ENCODE measurements at regions of chr10 and their contacts with region 1.

Region 1: DNA sequence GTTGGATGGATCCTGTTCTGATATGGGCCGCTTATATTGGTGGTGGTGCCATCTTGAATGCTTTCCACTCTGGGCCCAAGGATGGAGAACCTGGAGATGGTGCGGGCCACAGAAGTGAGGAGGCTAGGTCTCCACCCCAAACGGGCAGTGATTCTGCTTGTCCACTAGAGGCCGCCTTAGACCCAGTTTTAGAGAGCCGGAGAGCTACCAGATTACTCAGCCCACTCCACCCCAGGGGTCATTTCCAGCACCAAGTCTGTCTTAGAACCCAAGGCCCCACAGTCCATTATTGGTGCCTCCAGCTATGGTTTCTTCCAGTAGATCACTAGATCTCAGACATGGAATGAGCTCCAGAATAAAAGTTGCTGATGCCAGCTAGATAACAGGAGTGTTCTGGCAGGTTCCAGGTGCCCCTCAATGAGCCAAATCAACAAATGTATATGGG is 11.8 kb upstream of the CAMK2G start:
- DNase-seq: no peak
- ATAC-seq: peak; percentile 67
- H3K4me3 ChIP-seq: no peak overlapping the region
- H3K27ac ChIP-seq: peak overlapping the region; percentile 95
- H3K4me1 ChIP-seq: peaks cover 44 to 68% of the 10 kb centered on the region in 2 experiments
- H3K27me3 ChIP-seq: no peaks in the 10 kb centered on the region
- CTCF ChIP-seq: peak in 2 of 3 experiments; percentile 83 to 94; a peak in 4 of 6 replicates
- POLR2A ChIP-seq: no peak
- RAD21 ChIP-seq: no peak

Region 2: GRCh38 chr10:73899423-73899822 is 13.3 kb after region 1 on chr10:
- CTCF ChIA-PET with region 1: interaction called, 10 read pairs
- POLR2A ChIA-PET with region 1: interaction called, 98 read pairs
- RAD21 ChIA-PET with region 1: interaction called, 3 to 4 read pairs
- intact Hi-C with region 1: no loop called
- DNase-seq: peak; percentile 75
- ATAC-seq: peak; percentile 79
- H3K4me3 ChIP-seq: no peak overlapping the region
- H3K27ac ChIP-seq: peak overlapping the region; percentile 61
- H3K4me1 ChIP-seq: peaks cover 34 to 55% of the 10 kb centered on the region in 2 experiments
- H3K27me3 ChIP-seq: no peaks in the 10 kb centered on the region
- CTCF ChIP-seq: no peak
- POLR2A ChIP-seq: no peak
- RAD21 ChIP-seq: peak; percentile 6; the same call in 1 of the 2 replicates

Region 3: GRCh38 chr10:73920089-73920488 is 34.0 kb after region 1 on chr10:
- CTCF ChIA-PET with region 1: interaction called, 3 read pairs
- POLR2A ChIA-PET with region 1: interaction called, 32 read pairs
- RAD21 ChIA-PET with region 1: no interaction called
- intact Hi-C with region 1: no loop called
- DNase-seq: no peak
- ATAC-seq: no peak
- H3K4me3 ChIP-seq: no peak overlapping the region
- H3K27ac ChIP-seq: 0 out of 2 replicates have a peak overlapping the region, but pooled peaks have one; percentile 4
- H3K4me1 ChIP-seq: peaks cover 3 to 42% of the 10 kb centered on the region in 2 experiments; a peak in 2 of 4 replicates
- H3K27me3 ChIP-seq: no peaks in the 10 kb centered on the region
- CTCF ChIP-seq: no peak
- POLR2A ChIP-seq: no peak
- RAD21 ChIP-seq: no peak

Region 4: GRCh38 chr10:73940634-73941221 is 54.6 kb after region 1 on chr10:
- CTCF ChIA-PET with region 1: interaction called, 142 read pairs
- POLR2A ChIA-PET with region 1: interaction called, 37 read pairs
- RAD21 ChIA-PET with region 1: interaction called, 41 to 47 read pairs
- intact Hi-C with region 1: loop called (anchors 1 kb)
- DNase-seq: peak; percentile 37
- ATAC-seq: peak; percentile 97
- H3K4me3 ChIP-seq: peak overlapping the region in 1 of 2 experiments; percentile 31; a peak in 2 of 4 replicates
- H3K27ac ChIP-seq: peak overlapping the region; percentile 7; the same call in 1 of the 2 replicates
- H3K4me1 ChIP-seq: peaks cover 11 to 43% of the 10 kb centered on the region in 2 experiments
- H3K27me3 ChIP-seq: no peaks in the 10 kb centered on the region
- CTCF ChIP-seq: peak; percentile 90 to 95 (median 93); a peak in 5 of 6 replicates
- POLR2A ChIP-seq: no peak
- RAD21 ChIP-seq: peak; percentile 100

Region 5: DNA sequence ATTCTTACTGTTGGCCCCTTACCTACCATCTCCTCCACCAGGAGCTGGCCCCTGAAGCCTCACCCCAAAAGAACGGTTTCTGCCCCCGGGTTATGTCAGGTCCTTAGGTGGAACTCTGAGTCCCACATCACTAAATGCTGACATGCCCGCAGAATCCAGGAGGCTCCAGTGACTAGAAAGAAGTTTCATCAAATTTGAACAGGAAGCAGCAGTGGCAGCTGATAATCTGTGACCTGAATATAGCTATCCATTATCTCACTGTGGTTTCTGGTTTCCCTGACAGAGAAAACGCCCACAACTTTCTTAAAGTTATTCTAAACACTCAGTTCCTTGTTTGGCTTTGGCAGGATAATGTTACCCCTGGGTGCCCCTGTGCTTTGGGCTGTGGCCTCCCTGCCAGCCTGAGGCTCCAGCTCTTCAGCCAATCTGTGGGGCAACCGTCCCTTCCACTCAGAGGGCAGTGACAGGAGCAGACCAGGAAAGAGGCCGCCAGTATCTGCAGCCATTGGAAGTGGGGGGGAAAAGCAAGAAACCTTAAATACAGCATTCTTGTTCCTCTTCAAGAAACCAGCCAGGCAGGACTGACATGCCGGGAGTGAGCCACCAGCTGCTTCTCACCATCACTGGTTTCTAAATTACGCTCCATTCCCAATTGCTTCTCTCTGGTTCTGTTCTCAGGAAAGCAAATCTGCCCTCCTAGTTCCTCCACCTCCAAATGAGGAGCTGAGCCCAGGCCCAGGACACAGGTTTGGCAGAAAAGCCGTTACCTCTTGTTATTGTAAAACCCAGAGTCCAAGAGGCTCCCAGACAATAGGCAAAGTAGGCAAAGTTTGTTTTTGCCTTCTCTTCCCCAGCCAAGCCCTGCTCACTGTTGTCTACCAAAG is 70.6 kb after region 1 on chr10:
- CTCF ChIA-PET with region 1: interaction called, 25 read pairs
- POLR2A ChIA-PET with region 1: interaction called, 14 read pairs
- RAD21 ChIA-PET with region 1: interaction called, 4 to 7 read pairs
- intact Hi-C with region 1: loop called (anchors 1 kb)
- DNase-seq: no peak
- ATAC-seq: peak; percentile 40
- H3K4me3 ChIP-seq: no peak overlapping the region
- H3K27ac ChIP-seq: peak overlapping the region; percentile 44
- H3K4me1 ChIP-seq: peaks cover 15 to 31% of the 10 kb centered on the region in 2 experiments
- H3K27me3 ChIP-seq: no peaks in the 10 kb centered on the region
- CTCF ChIP-seq: no peak
- POLR2A ChIP-seq: no peak
- RAD21 ChIP-seq: no peak

Region 6: DNA sequence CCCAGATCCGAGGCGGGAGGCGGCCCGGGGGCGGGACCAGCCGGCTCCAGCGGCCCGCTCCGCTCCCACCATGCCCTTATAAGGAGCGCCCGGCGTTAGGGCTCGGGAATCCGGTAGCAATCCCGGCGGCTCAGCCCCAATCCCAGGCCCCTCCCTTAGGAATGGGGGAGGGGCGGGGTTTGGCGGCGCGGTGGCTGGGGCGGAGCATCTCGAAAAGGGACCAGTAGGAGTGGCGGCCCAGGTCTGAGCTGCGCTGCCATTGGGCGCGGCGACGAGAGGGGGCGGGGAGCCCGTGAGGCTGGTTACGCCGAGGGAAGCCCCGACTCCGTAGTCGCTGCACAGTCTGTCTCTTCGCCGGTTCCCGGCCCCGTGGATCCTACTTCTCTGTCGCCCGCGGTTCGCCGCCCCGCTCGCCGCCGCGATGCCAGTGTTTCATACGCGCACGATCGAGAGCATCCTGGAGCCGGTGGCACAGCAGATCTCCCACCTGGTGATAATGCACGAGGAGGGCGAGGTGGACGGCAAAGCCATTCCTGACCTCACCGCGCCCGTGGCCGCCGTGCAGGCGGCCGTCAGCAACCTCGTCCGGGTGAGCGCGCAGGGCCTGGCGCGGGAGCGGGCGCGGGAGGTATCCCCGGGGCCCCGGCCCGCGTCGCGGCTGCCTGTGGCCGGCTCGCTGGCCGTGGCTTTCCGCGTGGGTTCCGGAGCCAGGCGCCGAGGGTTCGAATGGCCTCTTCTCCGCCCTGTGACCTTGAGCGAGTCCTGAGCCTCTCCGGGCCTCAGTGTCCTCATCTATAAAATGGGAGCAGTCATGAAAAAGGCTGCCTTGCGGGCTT is 111.9 kb after region 1 on chr10 and contains the start of gene VCL:
- CTCF ChIA-PET with region 1: interaction called, 4 read pairs
- POLR2A ChIA-PET with region 1: interaction called, 9 read pairs
- RAD21 ChIA-PET with region 1: interaction called in 1 of 2 experiments, 3 read pairs
- intact Hi-C with region 1: loop called (anchors 2 kb)
- DNase-seq: peak; percentile 95
- ATAC-seq: peak; percentile 89
- H3K4me3 ChIP-seq: peak within 1 kb of the TSS; percentile 95 to 98
- H3K27ac ChIP-seq: peak within 1 kb of the TSS; percentile 60
- H3K4me1 ChIP-seq: peaks cover 8 to 48% of the 10 kb centered on the region in 2 experiments
- H3K27me3 ChIP-seq: no peaks in the 10 kb centered on the region
- CTCF ChIP-seq: no peak
- POLR2A ChIP-seq: peak; percentile 90
- RAD21 ChIP-seq: no peak
- total RNA-seq, gene VCL: 106 TPM

Region 7: DNA sequence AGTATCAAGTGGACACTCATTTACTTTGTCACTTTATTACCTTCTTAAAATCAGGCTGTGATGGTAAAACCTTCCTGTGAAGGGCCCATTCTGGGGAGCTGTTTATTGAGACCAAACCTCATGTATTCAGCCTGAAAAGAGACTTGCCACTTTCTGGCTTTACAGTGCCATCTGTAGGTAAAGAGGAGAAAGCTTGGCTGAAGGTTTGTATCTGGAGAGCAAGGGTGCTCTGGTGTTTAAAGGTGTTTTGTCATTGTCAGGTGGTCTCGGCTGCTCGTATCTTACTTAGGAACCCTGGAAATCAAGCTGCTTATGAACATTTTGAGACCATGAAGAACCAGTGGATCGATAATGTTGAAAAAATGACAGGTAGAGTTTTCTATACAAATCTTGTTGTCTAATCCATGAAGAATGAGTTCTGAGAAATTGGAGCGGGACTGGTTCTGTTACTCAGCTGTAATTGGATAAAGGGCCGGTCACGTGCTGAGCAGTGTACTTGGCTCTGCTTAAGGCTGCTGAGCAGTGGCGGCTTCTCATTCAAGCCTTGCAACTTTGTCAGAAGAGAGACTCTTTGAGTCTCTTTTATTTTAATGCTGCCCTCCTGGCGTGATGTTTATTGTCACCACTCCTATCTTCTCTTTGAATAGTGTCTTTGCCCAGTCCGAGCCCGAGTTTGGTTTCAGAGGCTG is 217.6 kb after region 1 on chr10:
- CTCF ChIA-PET with region 1: interaction called, 3 read pairs
- POLR2A ChIA-PET with region 1: interaction called, 5 read pairs
- RAD21 ChIA-PET with region 1: interaction called, 3 read pairs
- intact Hi-C with region 1: loop called (anchors 2 kb)
- DNase-seq: peak; percentile 16
- ATAC-seq: peak; percentile 78
- H3K4me3 ChIP-seq: no peak overlapping the region
- H3K27ac ChIP-seq: no peak overlapping the region
- H3K4me1 ChIP-seq: no peaks in the 10 kb centered on the region
- H3K27me3 ChIP-seq: no peaks in the 10 kb centered on the region
- CTCF ChIP-seq: peak; percentile 35 to 60 (median 50); a peak in 5 of 6 replicates
- POLR2A ChIP-seq: no peak
- RAD21 ChIP-seq: peak; percentile 65

Measured in HCT116 (cell line).